Mammary epithelial cell (primary cell): ENCODE measurements at regions of chr17 and their contacts with region 1.

Region 1: GRCh38 chr17:58391302-58391984 is 25.9 kb downstream of the RNF43 start:
- DNase-seq: peak; percentile 91
- H3K4me3 ChIP-seq: no peak overlapping the region
- H3K27ac ChIP-seq: no peak overlapping the region
- H3K4me1 ChIP-seq: peaks cover 29% of the 10 kb centered on the region
- H3K27me3 ChIP-seq: no peaks in the 10 kb centered on the region
- CTCF ChIP-seq: no peak

Region 2: DNA sequence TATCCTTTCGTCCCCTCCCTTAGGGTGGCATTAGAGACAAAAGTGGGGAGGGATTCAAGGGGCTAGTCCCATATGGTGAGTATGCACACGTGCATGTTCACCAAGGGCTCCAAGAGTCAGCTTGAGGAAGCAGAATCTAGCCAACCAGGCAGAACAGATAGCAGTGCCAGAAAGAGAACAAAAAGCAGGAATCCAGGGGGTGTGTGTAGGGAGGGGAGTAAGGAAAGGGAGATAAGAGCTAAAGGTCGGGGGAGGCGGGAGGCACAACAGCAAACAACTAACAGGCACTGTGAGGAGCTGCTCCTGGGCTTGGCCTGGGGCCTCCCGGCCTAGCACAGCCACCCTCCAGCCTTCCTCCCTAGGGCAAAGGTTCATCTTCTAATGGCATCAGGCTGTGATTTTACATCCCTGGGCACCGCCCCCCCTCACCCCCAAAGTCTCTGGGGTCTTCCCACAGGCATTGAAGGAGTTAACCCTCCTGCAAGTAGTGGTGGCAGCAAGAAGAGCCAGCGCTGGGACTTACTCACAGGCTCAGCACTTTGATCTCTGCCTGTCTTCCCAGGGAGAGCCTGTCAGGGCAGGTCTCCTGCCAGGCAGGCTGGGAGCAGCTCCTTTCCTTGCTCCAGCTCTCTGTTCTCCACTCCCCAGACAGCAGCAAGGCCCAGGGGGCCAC is 27.0 kb before region 1 on chr17:
- CTCF ChIA-PET with region 1: no interaction called
- dilution Hi-C with region 1: no loop called
- in situ Hi-C with region 1: no loop called
- intact Hi-C with region 1: loop called (anchors 2 kb)
- DNase-seq: peak; percentile 72
- H3K4me3 ChIP-seq: no peak overlapping the region
- H3K27ac ChIP-seq: no peak overlapping the region
- H3K4me1 ChIP-seq: peaks cover 17% of the 10 kb centered on the region
- H3K27me3 ChIP-seq: no peaks in the 10 kb centered on the region
- CTCF ChIP-seq: no peak